ENCODE measurements at regions of chr15 and their contacts with region 1.

Region 1: GRCh38 chr15:27831384-27832236 is 267.5 kb downstream of the OCA2 start:
- DNase-seq: peak; percentile 69 to 79
- H3K4me3 ChIP-seq: no peak overlapping the region
- H3K27ac ChIP-seq: no peak overlapping the region
- H3K4me1 ChIP-seq: peaks cover 5% of the 10 kb centered on the region
- H3K27me3 ChIP-seq: no peaks in the 10 kb centered on the region
- CTCF ChIP-seq: no peak
- POLR2A ChIP-seq: no peak

Region 2: GRCh38 chr15:25830844-25831451 is 2000.7 kb before region 1 on chr15:
- intact Hi-C with region 1: no loop called
- DNase-seq: no peak
- H3K4me3 ChIP-seq: peak overlapping the region; percentile 17 to 30
- H3K27ac ChIP-seq: peak overlapping the region; percentile 55
- H3K4me1 ChIP-seq: peaks cover 17% of the 10 kb centered on the region
- H3K27me3 ChIP-seq: no peaks in the 10 kb centered on the region
- CTCF ChIP-seq: no peak
- POLR2A ChIP-seq: no peak

Region 3: GRCh38 chr15:27670486-27671209 is 161.0 kb before region 1 on chr15:
- intact Hi-C with region 1: no loop called
- DNase-seq: peak; percentile 77 to 90
- H3K4me3 ChIP-seq: no peak overlapping the region
- H3K27ac ChIP-seq: no peak overlapping the region
- H3K4me1 ChIP-seq: no peaks in the 10 kb centered on the region
- H3K27me3 ChIP-seq: no peaks in the 10 kb centered on the region
- CTCF ChIP-seq: no peak
- POLR2A ChIP-seq: no peak

Region 4: GRCh38 chr15:27770086-27770607 is 61.5 kb before region 1 on chr15:
- intact Hi-C with region 1: loop called (anchors 10 kb)
- DNase-seq: no peak
- H3K4me3 ChIP-seq: no peak overlapping the region
- H3K27ac ChIP-seq: no peak overlapping the region
- H3K4me1 ChIP-seq: no peaks in the 10 kb centered on the region
- H3K27me3 ChIP-seq: no peaks in the 10 kb centered on the region
- CTCF ChIP-seq: no peak
- POLR2A ChIP-seq: no peak